Activated T-helper 1 cell treated with anti-CD3 and anti-CD28 coated beads, Interleukin-12 subunit alpha, Interleukin-12 subunit beta, Interleukin-2, Interleukin-4 antibody, amounts not matched to agents 30 ng/mL and 10 ng/mL and 1 ng/mL, durations not matched to agents 14 hours and 24 hours and 36 hours (primary cell): ENCODE measurements at regions of chr1 and their contacts with region 1.

Region 1: GRCh38 chr1:156020292-156021089 is at the start of gene SSR2:
- DNase-seq: peak; percentile 85
- H3K4me3 Mint-ChIP-seq: peak within 1 kb of the TSS; percentile 98
- H3K27ac Mint-ChIP-seq: peak within 1 kb of the TSS; percentile 94
- H3K4me1 Mint-ChIP-seq: peaks cover 29% of the 10 kb centered on the region
- H3K27me3 Mint-ChIP-seq: peaks cover 4% of the 10 kb centered on the region
- total RNA-seq, gene SSR2: 195 TPM in 2 replicates

Region 2: DNA sequence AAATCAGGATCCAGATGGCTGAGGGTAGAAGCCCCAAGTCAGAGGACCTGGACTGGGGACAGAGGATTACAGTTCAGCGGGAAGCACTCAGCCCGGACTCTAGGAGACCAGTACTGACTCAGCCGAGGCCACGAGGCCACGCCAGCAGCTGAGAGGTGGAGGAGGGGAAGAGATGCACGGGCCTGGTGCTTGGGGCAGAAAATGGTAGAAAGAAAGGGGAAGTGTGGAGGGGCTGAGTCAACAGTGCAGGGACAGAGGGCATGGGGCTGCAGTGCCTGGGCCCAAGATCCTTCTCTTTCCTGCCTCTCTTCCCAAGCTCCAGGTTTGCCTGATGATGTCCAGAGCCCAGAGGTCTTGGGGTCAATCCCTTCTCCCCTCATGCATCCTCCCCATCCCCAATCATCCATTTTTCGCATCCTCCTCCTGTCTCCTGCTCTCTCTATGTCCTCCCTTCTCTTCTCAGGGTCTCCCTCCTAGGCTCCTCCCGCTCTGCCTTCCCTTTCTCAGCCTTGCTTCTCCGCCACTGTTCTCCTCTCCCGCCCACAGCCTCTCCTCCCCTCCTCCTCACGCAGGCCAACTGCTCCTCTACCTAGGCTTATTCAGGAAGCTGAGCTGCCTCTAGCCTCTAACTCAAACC is 49.8 kb before region 1 on chr1:
- intact Hi-C with region 1: no loop called
- DNase-seq: no peak
- H3K4me3 Mint-ChIP-seq: peak overlapping the region; percentile 78
- H3K27ac Mint-ChIP-seq: peak overlapping the region; percentile 82
- H3K4me1 Mint-ChIP-seq: peaks cover 95% of the 10 kb centered on the region
- H3K27me3 Mint-ChIP-seq: no peaks in the 10 kb centered on the region

Region 3: GRCh38 chr1:155989242-155990004 is 31.1 kb before region 1 on chr1:
- intact Hi-C with region 1: loop called (anchors 1 kb)
- DNase-seq: peak; percentile 77
- H3K4me3 Mint-ChIP-seq: no peak overlapping the region
- H3K27ac Mint-ChIP-seq: no peak overlapping the region
- H3K4me1 Mint-ChIP-seq: peaks cover 18% of the 10 kb centered on the region
- H3K27me3 Mint-ChIP-seq: no peaks in the 10 kb centered on the region

Region 4: DNA sequence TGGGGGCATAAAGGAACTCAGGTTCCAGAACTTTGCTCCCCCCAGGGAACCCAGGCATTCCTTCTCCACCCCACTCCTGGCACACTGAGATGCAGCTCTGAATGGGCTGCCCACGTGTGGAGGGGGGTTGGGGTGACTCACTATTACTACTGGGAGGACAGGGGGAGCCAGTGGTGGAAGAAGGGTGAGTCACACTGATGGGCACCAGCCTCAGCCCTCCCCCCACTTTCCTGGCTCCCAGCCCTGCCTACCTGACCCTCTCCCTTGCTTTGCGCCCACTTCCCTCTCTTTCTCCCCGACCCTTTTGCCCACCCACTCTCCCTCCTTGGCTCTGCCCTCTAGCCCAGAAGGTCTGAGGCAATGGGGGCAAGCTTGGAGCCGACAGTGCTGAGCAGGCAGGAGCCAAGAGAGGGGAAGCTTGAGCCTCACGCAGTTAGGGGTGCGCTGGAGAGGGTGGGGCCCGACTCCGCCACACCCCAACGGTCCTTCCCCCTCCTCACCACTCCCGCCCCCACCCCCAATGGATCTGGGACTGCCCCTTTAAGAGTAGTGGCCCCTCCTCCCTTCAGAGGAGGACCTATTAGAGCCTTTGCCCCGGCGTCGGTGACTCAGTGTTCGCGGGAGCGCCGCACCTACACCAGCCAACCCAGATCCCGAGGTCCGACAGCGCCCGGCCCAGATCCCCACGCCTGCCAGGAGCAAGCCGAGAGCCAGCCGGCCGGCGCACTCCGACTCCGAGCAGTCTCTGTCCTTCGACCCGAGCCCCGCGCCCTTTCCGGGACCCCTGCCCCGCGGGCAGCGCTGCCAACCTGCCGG is 93.8 kb after region 1 on chr1 and contains the start of gene LMNA:
- intact Hi-C with region 1: no loop called
- DNase-seq: peak; percentile 57
- H3K4me3 Mint-ChIP-seq: peak within 1 kb of the TSS; percentile 91
- H3K27ac Mint-ChIP-seq: peak within 1 kb of the TSS; percentile 76
- H3K4me1 Mint-ChIP-seq: peaks cover 25% of the 10 kb centered on the region
- H3K27me3 Mint-ChIP-seq: peaks cover 53% of the 10 kb centered on the region
- total RNA-seq, gene LMNA: 80.1 and 84.1 TPM in 2 replicates